Activated CD4-positive, alpha-beta memory T cell treated with anti-CD3 and anti-CD28 coated beads for 36 hours (primary cell): ENCODE measurements at regions of chr5 and their contacts with region 1.

Region 1: GRCh38 chr5:141369994-141370848 is at the start of gene PCDHGB3:
- DNase-seq: peak; percentile 55
- H3K4me3 Mint-ChIP-seq: peak within 1 kb of the TSS; percentile 68
- H3K27ac Mint-ChIP-seq: no peak within 1 kb of the TSS
- H3K4me1 Mint-ChIP-seq: peaks cover 5% of the 10 kb centered on the region
- H3K27me3 Mint-ChIP-seq: peaks cover 48% of the 10 kb centered on the region
- total RNA-seq, gene PCDHGB3: 0.10 TPM in 1 of 2 experiments, not detected in the other

Region 2: DNA sequence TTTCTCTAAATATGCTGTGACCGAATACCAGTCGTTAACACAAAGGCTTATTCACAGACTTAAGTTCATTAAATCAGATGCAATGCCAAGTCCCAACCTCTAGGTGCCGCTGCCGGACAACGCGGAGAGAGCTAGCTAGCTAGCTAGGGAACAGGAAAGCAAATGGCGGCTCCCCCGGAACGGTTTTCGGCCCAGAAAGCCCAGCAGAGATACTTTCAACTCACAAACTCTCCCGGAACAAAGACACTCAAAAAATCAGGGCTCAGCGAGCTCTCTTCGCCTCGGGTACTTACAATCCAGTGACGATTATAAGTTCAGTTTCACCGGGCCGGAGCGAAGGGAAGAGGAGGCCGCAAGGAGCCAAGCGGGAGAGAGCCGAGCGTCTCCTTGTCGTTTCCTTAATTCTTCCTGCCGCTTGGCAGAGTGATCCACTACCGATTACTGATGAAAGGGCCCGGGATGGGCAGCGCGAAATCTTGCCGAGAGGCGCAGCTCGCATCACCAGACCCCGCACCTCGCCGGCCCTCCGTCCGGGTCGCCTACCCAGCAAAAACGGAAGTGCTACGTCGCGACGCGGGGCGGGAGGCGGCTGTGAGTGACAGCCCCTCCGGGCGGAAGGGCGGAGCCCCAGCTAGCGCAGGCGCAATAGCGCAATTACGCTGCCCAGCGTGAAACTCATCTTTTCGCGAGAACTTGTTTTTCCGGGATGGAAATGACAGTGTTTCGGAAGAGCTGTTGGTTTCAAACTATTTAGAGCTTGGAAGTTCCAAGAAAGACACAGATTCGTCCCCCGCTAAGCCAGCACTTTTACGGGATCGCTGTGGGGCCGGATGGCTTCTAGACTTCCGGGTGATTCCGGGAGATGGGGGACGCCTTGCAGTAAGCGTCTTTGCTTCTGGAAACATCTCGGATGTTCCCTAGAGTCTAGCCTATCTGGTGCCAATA is 49.7 kb before region 1 on chr5 and contains the start of gene TAF7:
- CTCF ChIA-PET with region 1: interaction called, 14 read pairs
- POLR2A ChIA-PET with region 1: interaction called, 3 read pairs
- intact Hi-C with region 1: no loop called
- DNase-seq: peak; percentile 95
- H3K4me3 Mint-ChIP-seq: peak within 1 kb of the TSS; percentile 98
- H3K27ac Mint-ChIP-seq: peak within 1 kb of the TSS; percentile 99
- H3K4me1 Mint-ChIP-seq: peaks cover 23% of the 10 kb centered on the region
- H3K27me3 Mint-ChIP-seq: no peaks in the 10 kb centered on the region
- total RNA-seq, gene TAF7: 54.6 to 55.5 TPM

Region 3: DNA sequence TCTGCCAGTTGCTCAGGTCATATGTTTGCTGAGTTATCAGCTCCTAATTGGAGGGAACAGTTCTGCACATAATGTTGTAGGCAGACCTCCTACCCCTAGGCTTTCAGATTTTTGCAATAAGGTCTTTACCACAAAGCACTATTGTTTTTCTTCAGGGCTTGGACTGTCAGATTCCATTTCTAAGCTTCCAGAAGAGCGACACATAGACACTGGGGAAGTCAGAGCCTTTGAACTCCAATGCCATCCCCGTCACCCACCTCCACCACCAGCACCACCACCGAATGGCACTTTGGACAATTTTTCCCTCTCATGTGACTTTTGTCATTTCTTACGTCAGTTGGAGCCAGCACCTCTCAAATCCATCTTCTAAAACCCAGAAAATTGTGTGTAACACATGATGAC is 982.9 kb after region 1 on chr5:
- CTCF ChIA-PET with region 1: no interaction called
- POLR2A ChIA-PET with region 1: no interaction called
- intact Hi-C with region 1: no loop called
- DNase-seq: no peak
- H3K4me3 Mint-ChIP-seq: no peak overlapping the region
- H3K27ac Mint-ChIP-seq: no peak overlapping the region
- H3K4me1 Mint-ChIP-seq: peaks cover 16% of the 10 kb centered on the region
- H3K27me3 Mint-ChIP-seq: no peaks in the 10 kb centered on the region